ENCODE measurements at regions of chr18 and their contacts with region 1.

Region 1: GRCh38 chr18:1825296-1825695 is 746.0 kb downstream of the METTL4 start:
- DNase-seq: no peak
- H3K4me3 ChIP-seq: no peak overlapping the region
- H3K27ac ChIP-seq: no peak overlapping the region
- H3K4me1 ChIP-seq: no peaks in the 10 kb centered on the region
- H3K27me3 ChIP-seq: no peaks in the 10 kb centered on the region
- CTCF ChIP-seq: no peak
- POLR2A ChIP-seq: no peak

Region 2: GRCh38 chr18:1522249-1522615 is 303.1 kb before region 1 on chr18:
- intact Hi-C with region 1: no loop called
- DNase-seq: no peak
- H3K4me3 ChIP-seq: no peak overlapping the region
- H3K27ac ChIP-seq: no peak overlapping the region
- H3K4me1 ChIP-seq: no peaks in the 10 kb centered on the region
- H3K27me3 ChIP-seq: no peaks in the 10 kb centered on the region
- CTCF ChIP-seq: no peak
- POLR2A ChIP-seq: no peak

Region 3: DNA sequence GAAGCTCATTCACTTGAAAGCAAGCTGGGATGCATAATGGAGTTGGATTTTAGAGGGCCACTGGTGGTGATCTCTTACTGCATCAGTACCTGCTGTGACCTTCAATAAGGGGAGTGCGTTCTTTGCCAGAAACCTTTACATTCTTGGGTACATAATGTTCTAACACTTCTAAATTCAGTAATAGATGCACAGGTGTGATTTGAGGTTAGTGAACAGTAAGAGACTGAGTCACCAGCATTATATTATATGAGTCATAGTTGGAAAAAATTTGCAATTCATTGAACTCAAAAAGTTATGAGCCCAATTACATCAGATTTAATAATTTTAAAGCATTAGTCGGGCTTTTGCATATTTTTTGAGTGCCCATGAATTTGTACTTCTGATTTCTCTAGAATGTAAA is 117.3 kb before region 1 on chr18:
- intact Hi-C with region 1: loop called (anchors 5 kb)
- DNase-seq: no peak
- H3K4me3 ChIP-seq: no peak overlapping the region
- H3K27ac ChIP-seq: no peak overlapping the region
- H3K4me1 ChIP-seq: no peaks in the 10 kb centered on the region
- H3K27me3 ChIP-seq: no peaks in the 10 kb centered on the region
- CTCF ChIP-seq: no peak
- POLR2A ChIP-seq: no peak

Measured in breast epithelium (tissue), 4 donors.